PC-9 (cell line): ENCODE measurements at regions of chr7 and their contacts with region 1.

Region 1: DNA sequence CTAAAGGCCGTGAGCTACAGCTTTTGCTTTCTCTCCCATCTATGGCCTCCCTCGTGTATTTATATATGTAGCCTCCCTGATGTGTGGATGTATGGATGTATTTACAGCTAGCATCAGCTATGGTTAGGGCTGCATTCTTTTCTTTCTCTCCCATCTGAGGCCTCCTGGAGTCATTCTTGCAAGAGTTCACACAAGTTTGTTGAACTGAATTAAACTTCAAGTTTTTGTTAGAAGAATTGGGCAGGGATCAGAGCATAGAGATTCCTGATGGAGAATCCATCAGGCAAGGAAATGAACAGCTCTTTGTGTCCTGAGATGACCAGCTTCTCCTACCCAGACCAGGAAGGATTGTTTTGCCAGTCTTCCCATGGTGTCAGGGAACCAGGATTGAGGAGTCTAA is 60.3 kb downstream of the AHCYL2 start:
- DNase-seq: no peak
- H3K4me3 ChIP-seq: no peak overlapping the region
- H3K27ac ChIP-seq: no peak overlapping the region
- H3K4me1 ChIP-seq: no peaks in the 10 kb centered on the region
- H3K27me3 ChIP-seq: no peaks in the 10 kb centered on the region
- CTCF ChIP-seq: no peak

Region 2: GRCh38 chr7:129401967-129402860 is 117.1 kb after region 1 on chr7:
- CTCF ChIA-PET with region 1: interaction called, 18 read pairs
- POLR2A ChIA-PET with region 1: no interaction called
- intact Hi-C with region 1: no loop called
- DNase-seq: no peak
- H3K4me3 ChIP-seq: no peak overlapping the region
- H3K27ac ChIP-seq: peak overlapping the region; percentile 41; the same call in 1 of the 2 replicates
- H3K4me1 ChIP-seq: peaks cover 30% of the 10 kb centered on the region
- H3K27me3 ChIP-seq: no peaks in the 10 kb centered on the region
- CTCF ChIP-seq: 0 out of 2 replicates have a peak, but pooled peaks have one; percentile 29